CD8-positive, alpha-beta memory T cell (primary cell): ENCODE measurements at regions of chr5 and their contacts with region 1.

Region 1: DNA sequence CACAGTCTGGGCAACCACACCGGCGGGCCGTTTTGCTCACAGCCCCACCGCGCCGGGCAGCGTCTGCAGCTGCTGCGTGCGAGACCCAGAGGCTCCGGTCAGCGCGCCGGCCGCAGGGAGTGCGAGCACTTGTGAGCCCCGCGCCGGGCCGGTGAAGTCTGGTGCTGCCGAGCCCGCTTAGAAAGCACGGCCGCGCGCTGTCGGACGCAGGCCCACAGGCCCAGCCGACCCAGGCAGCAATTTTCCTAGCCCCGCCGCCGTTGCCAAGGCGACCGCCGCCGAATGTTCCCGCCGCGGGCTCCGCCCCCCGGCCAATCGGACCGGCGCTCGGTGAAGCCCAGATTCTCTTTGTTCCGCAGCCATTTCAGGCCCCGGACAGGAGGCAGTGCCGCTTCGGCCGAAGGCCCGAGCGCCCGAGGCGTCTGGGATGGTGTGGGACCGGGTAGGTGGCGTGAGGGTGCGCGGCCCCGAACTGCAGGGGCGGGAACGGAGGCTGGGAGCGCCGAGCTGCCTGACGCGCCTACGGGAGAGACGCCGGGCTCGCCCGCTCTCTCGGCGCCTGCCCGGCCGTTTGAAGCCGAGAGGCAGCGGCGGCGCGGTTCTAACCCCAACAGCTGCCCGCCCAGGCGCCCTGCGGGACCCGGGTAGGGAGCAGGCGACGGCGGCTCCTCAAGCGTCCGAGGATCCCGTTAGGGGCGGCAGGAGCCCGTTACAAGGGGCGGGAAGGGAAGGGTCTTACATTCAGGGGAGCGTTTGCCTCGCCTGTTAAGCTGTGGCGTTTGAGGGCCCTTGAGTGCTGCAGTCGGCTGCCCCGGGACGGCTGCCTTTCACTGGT is at the start of gene TNPO1:
- DNase-seq: peak; percentile 77 to 91 (median 86)
- H3K4me3 ChIP-seq: peak within 1 kb of the TSS; percentile 74
- H3K4me3 Mint-ChIP-seq: peak within 1 kb of the TSS; percentile 88 to 95 (median 93)
- H3K27ac ChIP-seq: peak within 1 kb of the TSS; percentile 81
- H3K27ac Mint-ChIP-seq: peak within 1 kb of the TSS; percentile 88 to 98 (median 93)
- H3K4me1 ChIP-seq: peaks cover 17% of the 10 kb centered on the region
- H3K4me1 Mint-ChIP-seq: peaks cover 16 to 27% (median 27%) of the 10 kb centered on the region in 3 donors
- H3K27me3 ChIP-seq: peaks cover 5% of the 10 kb centered on the region
- H3K27me3 Mint-ChIP-seq: peaks cover 11 to 21% of the 10 kb centered on the region in 2 donors
- total RNA-seq, gene TNPO1: 134 to 137 TPM

Region 2: DNA sequence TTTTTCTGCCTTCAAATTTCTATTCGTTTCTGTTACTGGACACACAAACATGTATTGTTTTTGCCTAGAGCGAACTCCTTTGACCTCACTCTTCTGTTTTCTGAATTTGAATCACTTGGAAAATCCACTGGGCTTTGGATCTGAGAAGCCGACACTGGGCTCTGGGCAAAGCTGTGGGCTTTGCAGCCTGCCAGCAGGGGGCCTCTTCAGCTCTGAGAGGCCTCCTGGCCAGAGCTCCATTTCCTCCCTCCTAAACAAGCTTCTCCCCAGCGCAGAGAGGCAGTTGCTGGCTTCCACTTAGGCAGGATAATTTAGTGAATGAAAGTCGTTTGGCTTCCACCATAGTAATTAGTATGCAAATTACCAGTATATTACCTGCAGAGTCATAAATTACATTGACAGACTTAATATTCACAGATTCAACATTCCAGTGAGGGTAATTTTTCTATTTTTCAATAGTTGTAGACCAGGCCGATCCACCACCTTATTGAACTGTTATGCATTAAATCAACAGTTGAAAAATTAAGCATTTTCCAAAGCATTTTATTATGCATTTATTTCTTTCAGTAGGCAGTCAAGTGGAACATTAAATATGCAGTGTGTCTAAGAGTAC is 205.3 kb before region 1 on chr5:
- CTCF ChIA-PET with region 1: interaction called, 22 read pairs
- POLR2A ChIA-PET with region 1: no interaction called
- DNase-seq: peak in 4 of 5 donors; percentile 4 to 49 (median 12)
- H3K4me3 ChIP-seq: no peak overlapping the region
- H3K4me3 Mint-ChIP-seq: no peak overlapping the region
- H3K27ac ChIP-seq: no peak overlapping the region
- H3K27ac Mint-ChIP-seq: no peak overlapping the region
- H3K4me1 ChIP-seq: no peaks in the 10 kb centered on the region
- H3K4me1 Mint-ChIP-seq: peaks cover 0 to 6% (median 2%) of the 10 kb centered on the region in 3 donors
- H3K27me3 ChIP-seq: no peaks in the 10 kb centered on the region
- H3K27me3 Mint-ChIP-seq: peaks cover 0 to 7% of the 10 kb centered on the region in 2 donors

Region 3: GRCh38 chr5:72767289-72767998 is 49.1 kb before region 1 on chr5:
- CTCF ChIA-PET with region 1: no interaction called
- POLR2A ChIA-PET with region 1: no interaction called
- DNase-seq: no peak
- H3K4me3 ChIP-seq: no peak overlapping the region
- H3K4me3 Mint-ChIP-seq: no peak overlapping the region
- H3K27ac ChIP-seq: no peak overlapping the region
- H3K27ac Mint-ChIP-seq: no peak overlapping the region
- H3K4me1 ChIP-seq: no peaks in the 10 kb centered on the region
- H3K4me1 Mint-ChIP-seq: no peaks in the 10 kb centered on the region
- H3K27me3 ChIP-seq: no peaks in the 10 kb centered on the region
- H3K27me3 Mint-ChIP-seq: peaks cover 6 to 24% of the 10 kb centered on the region in 2 donors

Region 4: GRCh38 chr5:72847989-72848473 is 31.5 kb after region 1 on chr5:
- CTCF ChIA-PET with region 1: interaction called, 16 read pairs
- POLR2A ChIA-PET with region 1: interaction called, 5 read pairs
- DNase-seq: peak; percentile 78 to 87 (median 83)
- H3K4me3 ChIP-seq: peak overlapping the region; percentile 92
- H3K4me3 Mint-ChIP-seq: peak overlapping the region; percentile 97 to 99 (median 99)
- H3K27ac ChIP-seq: peak overlapping the region; percentile 91
- H3K27ac Mint-ChIP-seq: peak overlapping the region; percentile 86 to 99 (median 98)
- H3K4me1 ChIP-seq: peaks cover 39% of the 10 kb centered on the region
- H3K4me1 Mint-ChIP-seq: peaks cover 46 to 66% (median 57%) of the 10 kb centered on the region in 3 donors
- H3K27me3 ChIP-seq: no peaks in the 10 kb centered on the region
- H3K27me3 Mint-ChIP-seq: peaks cover 0 to 3% of the 10 kb centered on the region in 2 donors